ENCODE measurements at regions of chr16 and their contacts with region 1.

Region 1: DNA sequence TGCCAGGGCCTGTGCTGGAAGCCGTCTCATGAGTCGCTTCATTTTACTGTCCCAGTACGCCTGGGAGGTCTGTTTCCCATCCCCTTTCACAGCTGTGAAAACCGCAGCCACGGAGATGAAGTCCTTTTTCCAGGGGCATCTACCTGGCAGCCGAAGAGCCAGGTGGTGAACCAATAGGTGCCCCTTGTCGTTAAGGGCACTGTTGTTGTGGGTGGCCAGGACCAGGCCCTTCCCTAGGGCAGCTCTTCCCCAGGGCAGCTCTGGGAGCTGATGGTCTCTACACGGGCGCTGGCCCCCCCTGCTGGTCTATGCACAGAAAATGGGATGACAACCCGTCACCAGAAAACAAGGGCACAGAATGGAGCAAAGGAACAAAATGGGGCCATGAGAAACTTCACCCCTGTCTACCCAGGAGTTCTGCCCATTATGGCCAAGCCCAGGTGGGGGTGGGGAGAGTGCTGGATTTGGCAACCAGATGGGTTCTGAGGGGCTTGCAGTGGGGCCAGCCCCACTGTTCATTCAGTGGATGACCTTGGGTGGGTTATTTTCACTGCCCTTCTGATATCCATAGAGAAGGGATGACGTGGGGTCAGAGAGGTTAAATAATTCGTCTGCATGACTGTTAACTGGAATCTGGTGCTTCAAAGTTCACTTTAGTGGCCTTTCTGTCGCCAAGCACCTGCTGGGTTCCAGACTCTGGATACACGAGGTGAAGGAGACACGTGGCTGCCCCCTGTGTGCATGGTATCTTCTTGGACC is 11.5 kb downstream of the RMI2 start:
- DNase-seq: peak; percentile 74
- ATAC-seq: peak; percentile 35
- H3K4me3 ChIP-seq: no peak overlapping the region
- H3K4me3 Mint-ChIP-seq: peak overlapping the region; percentile 16
- H3K27ac ChIP-seq: no peak overlapping the region
- H3K27ac Mint-ChIP-seq: peak overlapping the region; percentile 37
- H3K4me1 ChIP-seq: peaks cover 42 to 45% of the 10 kb centered on the region in 2 donors
- H3K4me1 Mint-ChIP-seq: peaks cover 53% of the 10 kb centered on the region
- H3K27me3 ChIP-seq: peaks cover 0 to 45% (median 25%) of the 10 kb centered on the region in 4 experiments
- H3K27me3 Mint-ChIP-seq: peaks cover 30% of the 10 kb centered on the region
- CTCF ChIP-seq: peak; percentile 68

Region 2: DNA sequence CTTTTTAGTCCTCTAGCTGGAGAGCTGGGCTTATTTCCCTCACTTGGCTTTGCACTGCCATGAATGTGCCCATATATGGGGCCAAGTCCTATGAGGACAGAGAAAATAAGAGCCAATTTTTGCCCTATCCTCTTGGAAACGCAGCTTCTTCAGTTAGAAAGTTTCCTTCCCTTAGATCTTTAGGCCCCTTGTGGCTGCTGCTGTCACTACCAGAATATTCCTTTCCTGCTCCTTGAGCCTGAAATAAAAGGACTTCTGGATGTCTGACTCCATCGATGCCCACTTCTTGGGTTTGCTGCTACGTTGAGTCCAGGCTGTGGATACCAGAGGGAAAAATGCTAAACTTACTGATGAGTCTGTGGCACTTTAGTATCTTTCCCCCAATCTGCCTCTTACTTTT is 1661.6 kb before region 1 on chr16:
- CTCF ChIA-PET with region 1: no interaction called
- POLR2A ChIA-PET with region 1: no interaction called
- intact Hi-C with region 1: no loop called
- DNase-seq: no peak
- ATAC-seq: no peak
- H3K4me3 ChIP-seq: no peak overlapping the region
- H3K4me3 Mint-ChIP-seq: no peak overlapping the region
- H3K27ac ChIP-seq: no peak overlapping the region
- H3K27ac Mint-ChIP-seq: no peak overlapping the region
- H3K4me1 ChIP-seq: no peaks in the 10 kb centered on the region
- H3K4me1 Mint-ChIP-seq: no peaks in the 10 kb centered on the region
- H3K27me3 ChIP-seq: peaks cover 0 to 2% (median 0%) of the 10 kb centered on the region in 4 experiments
- H3K27me3 Mint-ChIP-seq: peaks cover 20% of the 10 kb centered on the region
- CTCF ChIP-seq: no peak

Region 3: GRCh38 chr16:10981697-10982216 is 375.0 kb before region 1 on chr16:
- CTCF ChIA-PET with region 1: interaction called, 15 read pairs
- POLR2A ChIA-PET with region 1: no interaction called
- intact Hi-C with region 1: no loop called
- DNase-seq: peak; percentile 73
- ATAC-seq: peak; percentile 93
- H3K4me3 ChIP-seq: no peak overlapping the region
- H3K4me3 Mint-ChIP-seq: peak overlapping the region; percentile 82
- H3K27ac ChIP-seq: peak overlapping the region in 1 of 2 donors; percentile 10
- H3K27ac Mint-ChIP-seq: peak overlapping the region; percentile 84
- H3K4me1 ChIP-seq: peaks cover 4 to 22% of the 10 kb centered on the region in 2 donors
- H3K4me1 Mint-ChIP-seq: peaks cover 39% of the 10 kb centered on the region
- H3K27me3 ChIP-seq: no peaks in the 10 kb centered on the region
- H3K27me3 Mint-ChIP-seq: no peaks in the 10 kb centered on the region
- CTCF ChIP-seq: peak; percentile 66

Region 4: GRCh38 chr16:11181899-11182279 is 174.9 kb before region 1 on chr16:
- CTCF ChIA-PET with region 1: interaction called, 3 read pairs
- POLR2A ChIA-PET with region 1: no interaction called
- intact Hi-C with region 1: loop called (anchors 5 kb)
- DNase-seq: peak; percentile 67
- ATAC-seq: peak; percentile 50
- H3K4me3 ChIP-seq: no peak overlapping the region
- H3K4me3 Mint-ChIP-seq: peak overlapping the region; percentile 65
- H3K27ac ChIP-seq: no peak overlapping the region
- H3K27ac Mint-ChIP-seq: peak overlapping the region; percentile 73
- H3K4me1 ChIP-seq: peaks cover 10 to 34% of the 10 kb centered on the region in 2 donors
- H3K4me1 Mint-ChIP-seq: peaks cover 44% of the 10 kb centered on the region
- H3K27me3 ChIP-seq: no peaks in the 10 kb centered on the region
- H3K27me3 Mint-ChIP-seq: no peaks in the 10 kb centered on the region
- CTCF ChIP-seq: no peak

Region 5: GRCh38 chr16:11312718-11313492 is 43.8 kb before region 1 on chr16:
- CTCF ChIA-PET with region 1: interaction called, 77 read pairs
- POLR2A ChIA-PET with region 1: interaction called, 16 read pairs
- intact Hi-C with region 1: loop called (anchors 1 kb)
- DNase-seq: peak; percentile 37
- ATAC-seq: no peak
- H3K4me3 ChIP-seq: no peak overlapping the region
- H3K4me3 Mint-ChIP-seq: peak overlapping the region; percentile 48
- H3K27ac ChIP-seq: no peak overlapping the region
- H3K27ac Mint-ChIP-seq: peak overlapping the region; percentile 82
- H3K4me1 ChIP-seq: peaks cover 59 to 73% of the 10 kb centered on the region in 2 donors
- H3K4me1 Mint-ChIP-seq: peaks cover 71% of the 10 kb centered on the region
- H3K27me3 ChIP-seq: no peaks in the 10 kb centered on the region
- H3K27me3 Mint-ChIP-seq: no peaks in the 10 kb centered on the region
- CTCF ChIP-seq: no peak

Region 6: DNA sequence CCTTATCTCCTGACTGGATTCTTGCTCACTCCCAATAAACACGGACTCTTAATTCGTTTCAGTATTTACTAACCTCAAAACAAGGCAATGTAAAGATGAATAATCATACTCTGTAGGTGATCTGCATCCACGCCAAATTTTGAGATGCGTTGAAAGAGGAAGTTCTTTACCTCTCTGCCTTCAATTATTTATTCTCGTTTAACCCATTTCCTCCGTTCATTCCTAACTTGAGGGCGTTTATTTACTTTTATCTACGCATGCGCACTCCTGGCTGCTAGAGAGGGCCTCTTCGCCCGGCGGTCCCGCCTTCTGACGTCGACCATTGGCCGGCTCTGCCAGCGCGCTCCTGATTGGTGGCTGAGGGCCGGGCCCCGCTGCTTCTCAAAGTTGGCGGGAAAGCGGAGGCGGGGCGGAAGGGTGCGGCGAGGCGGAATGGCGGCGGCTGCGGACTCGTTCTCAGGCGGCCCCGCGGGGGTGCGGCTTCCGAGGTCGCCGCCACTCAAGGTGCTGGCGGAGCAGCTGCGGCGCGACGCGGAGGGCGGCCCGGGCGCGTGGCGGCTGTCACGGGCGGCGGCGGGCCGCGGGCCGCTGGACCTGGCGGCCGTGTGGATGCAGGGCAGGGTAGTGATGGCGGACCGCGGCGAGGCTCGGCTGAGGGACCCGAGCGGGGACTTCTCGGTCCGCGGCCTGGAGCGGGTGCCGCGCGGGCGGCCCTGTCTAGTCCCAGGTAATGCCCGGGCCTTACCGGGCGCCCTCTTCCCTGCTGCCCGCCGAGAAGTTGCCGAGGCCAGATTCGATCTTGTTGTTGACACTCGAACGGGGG is 11.5 kb before region 1 on chr16 and contains the start of gene RMI2:
- CTCF ChIA-PET with region 1: interaction called, 9 read pairs
- POLR2A ChIA-PET with region 1: interaction called, 4 read pairs
- intact Hi-C with region 1: loop called (anchors 1 kb)
- DNase-seq: peak; percentile 97
- ATAC-seq: peak; percentile 100
- H3K4me3 ChIP-seq: peak within 1 kb of the TSS; percentile 61 to 76 (median 70)
- H3K4me3 Mint-ChIP-seq: peak within 1 kb of the TSS; percentile 90
- H3K27ac ChIP-seq: peak within 1 kb of the TSS in 1 of 2 donors; percentile 26
- H3K27ac Mint-ChIP-seq: peak within 1 kb of the TSS; percentile 78
- H3K4me1 ChIP-seq: peaks cover 8 to 25% of the 10 kb centered on the region in 2 donors
- H3K4me1 Mint-ChIP-seq: peaks cover 39% of the 10 kb centered on the region
- H3K27me3 ChIP-seq: no peaks in the 10 kb centered on the region
- H3K27me3 Mint-ChIP-seq: no peaks in the 10 kb centered on the region
- CTCF ChIP-seq: no peak
- total RNA-seq, gene RMI2: 25.5 and 27.0 TPM in 2 replicates

Region 7: GRCh38 chr16:11431915-11432465 is 75.2 kb after region 1 on chr16:
- CTCF ChIA-PET with region 1: no interaction called
- POLR2A ChIA-PET with region 1: no interaction called
- intact Hi-C with region 1: no loop called
- DNase-seq: no peak
- ATAC-seq: no peak
- H3K4me3 ChIP-seq: no peak overlapping the region
- H3K4me3 Mint-ChIP-seq: no peak overlapping the region
- H3K27ac ChIP-seq: no peak overlapping the region
- H3K27ac Mint-ChIP-seq: no peak overlapping the region
- H3K4me1 ChIP-seq: no peaks in the 10 kb centered on the region
- H3K4me1 Mint-ChIP-seq: no peaks in the 10 kb centered on the region
- H3K27me3 ChIP-seq: peaks cover 0 to 5% (median 2%) of the 10 kb centered on the region in 4 experiments
- H3K27me3 Mint-ChIP-seq: no peaks in the 10 kb centered on the region
- CTCF ChIP-seq: no peak